ENCODE measurements at regions of chr2 and their contacts with region 1.

Region 1: DNA sequence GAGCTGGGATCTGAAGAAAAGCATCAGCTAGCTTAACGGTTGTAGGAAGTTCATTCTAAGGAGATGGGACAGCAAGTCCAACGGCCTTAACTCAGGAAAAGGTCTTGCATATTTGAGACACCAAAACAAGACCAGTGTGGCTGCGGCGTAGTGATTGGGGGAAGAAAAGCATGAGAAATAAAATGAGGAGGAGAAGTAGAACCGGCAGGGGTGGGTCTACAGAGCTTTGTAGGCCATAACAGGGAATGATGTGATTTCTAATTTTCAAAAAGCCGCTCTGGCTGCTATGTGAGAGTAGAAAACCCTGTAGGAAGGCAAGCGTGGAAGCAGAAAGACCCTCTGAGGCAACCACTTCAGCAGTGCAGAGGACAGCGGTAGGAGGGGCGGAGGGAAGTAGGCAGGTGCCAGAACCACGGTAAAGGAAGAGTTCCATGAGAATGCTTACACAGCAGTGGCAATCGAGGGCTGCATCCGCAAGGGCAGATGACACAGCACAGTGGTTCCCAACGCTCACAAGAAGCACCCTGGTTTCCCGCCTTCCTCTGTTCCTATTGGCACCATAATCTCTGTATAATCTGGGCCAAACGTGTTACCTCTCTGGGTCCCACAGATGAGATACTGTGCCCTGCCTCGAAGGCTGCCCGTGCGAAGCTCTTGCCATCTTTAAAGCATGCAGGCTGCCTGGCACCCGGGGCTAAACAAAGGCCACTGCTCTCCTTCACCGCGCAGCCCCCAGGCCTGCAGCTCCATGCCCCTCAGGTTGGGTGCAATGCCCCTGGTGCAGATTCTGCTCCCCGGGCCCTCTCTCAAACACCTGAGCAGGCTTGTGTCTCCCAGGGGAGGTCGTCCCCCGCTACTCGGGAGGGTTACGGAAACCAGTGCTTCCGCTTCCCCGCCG is 791 bp downstream of the ANKRD39 start:
- DNase-seq: no peak
- ATAC-seq: no peak
- H3K4me3 ChIP-seq: peak overlapping the region; percentile 48 to 87 (median 73)
- H3K4me3 Mint-ChIP-seq: peak overlapping the region; percentile 86
- H3K27ac ChIP-seq: peak overlapping the region; percentile 73 to 88
- H3K27ac Mint-ChIP-seq: peak overlapping the region; percentile 89
- H3K4me1 ChIP-seq: peaks cover 16 to 20% of the 10 kb centered on the region in 2 donors
- H3K4me1 Mint-ChIP-seq: peaks cover 17% of the 10 kb centered on the region
- H3K27me3 ChIP-seq: peaks cover 0 to 10% (median 0%) of the 10 kb centered on the region in 4 experiments
- H3K27me3 Mint-ChIP-seq: no peaks in the 10 kb centered on the region
- CTCF ChIP-seq: no peak

Region 2: GRCh38 chr2:96536445-96537065 is 320.5 kb before region 1 on chr2 and contains the start of gene ARID5A:
- CTCF ChIA-PET with region 1: no interaction called
- POLR2A ChIA-PET with region 1: no interaction called
- intact Hi-C with region 1: loop called (anchors 5 kb)
- DNase-seq: peak; percentile 92
- ATAC-seq: peak; percentile 71
- H3K4me3 ChIP-seq: peak within 1 kb of the TSS; percentile 28 to 85 (median 76)
- H3K4me3 Mint-ChIP-seq: peak within 1 kb of the TSS; percentile 83
- H3K27ac ChIP-seq: peak within 1 kb of the TSS; percentile 81 to 94
- H3K27ac Mint-ChIP-seq: peak within 1 kb of the TSS; percentile 97
- H3K4me1 ChIP-seq: peaks cover 38 to 55% of the 10 kb centered on the region in 2 donors
- H3K4me1 Mint-ChIP-seq: peaks cover 44% of the 10 kb centered on the region
- H3K27me3 ChIP-seq: no peaks in the 10 kb centered on the region
- H3K27me3 Mint-ChIP-seq: no peaks in the 10 kb centered on the region
- CTCF ChIP-seq: peak; percentile 45
- total RNA-seq, gene ARID5A: 93.0 and 100 TPM in 2 replicates

Region 3: GRCh38 chr2:96739633-96740428 is 117.2 kb before region 1 on chr2 and contains the start of gene LMAN2L:
- CTCF ChIA-PET with region 1: interaction called, 5 read pairs
- POLR2A ChIA-PET with region 1: no interaction called
- intact Hi-C with region 1: loop called (anchors 1 kb)
- DNase-seq: peak; percentile 97
- ATAC-seq: peak; percentile 98
- H3K4me3 ChIP-seq: peak within 1 kb of the TSS; percentile 67 to 93 (median 88)
- H3K4me3 Mint-ChIP-seq: peak within 1 kb of the TSS; percentile 97
- H3K27ac ChIP-seq: peak within 1 kb of the TSS; percentile 80 to 85
- H3K27ac Mint-ChIP-seq: peak within 1 kb of the TSS; percentile 97
- H3K4me1 ChIP-seq: peaks cover 14 to 25% of the 10 kb centered on the region in 2 donors
- H3K4me1 Mint-ChIP-seq: peaks cover 29% of the 10 kb centered on the region
- H3K27me3 ChIP-seq: no peaks in the 10 kb centered on the region
- H3K27me3 Mint-ChIP-seq: no peaks in the 10 kb centered on the region
- CTCF ChIP-seq: no peak
- total RNA-seq, gene LMAN2L: 10.7 TPM in 2 replicates

Region 4: GRCh38 chr2:96773922-96774321 is 83.1 kb before region 1 on chr2:
- CTCF ChIA-PET with region 1: interaction called, 10 read pairs
- POLR2A ChIA-PET with region 1: no interaction called
- intact Hi-C with region 1: no loop called
- DNase-seq: peak; percentile 75
- ATAC-seq: peak; percentile 70
- H3K4me3 ChIP-seq: peak overlapping the region; percentile 11 to 67 (median 58)
- H3K4me3 Mint-ChIP-seq: peak overlapping the region; percentile 94
- H3K27ac ChIP-seq: peak overlapping the region; percentile 56 to 78
- H3K27ac Mint-ChIP-seq: peak overlapping the region; percentile 93
- H3K4me1 ChIP-seq: peaks cover 23 to 47% of the 10 kb centered on the region in 2 donors
- H3K4me1 Mint-ChIP-seq: peaks cover 44% of the 10 kb centered on the region
- H3K27me3 ChIP-seq: no peaks in the 10 kb centered on the region
- H3K27me3 Mint-ChIP-seq: no peaks in the 10 kb centered on the region
- CTCF ChIP-seq: no peak

Region 5: DNA sequence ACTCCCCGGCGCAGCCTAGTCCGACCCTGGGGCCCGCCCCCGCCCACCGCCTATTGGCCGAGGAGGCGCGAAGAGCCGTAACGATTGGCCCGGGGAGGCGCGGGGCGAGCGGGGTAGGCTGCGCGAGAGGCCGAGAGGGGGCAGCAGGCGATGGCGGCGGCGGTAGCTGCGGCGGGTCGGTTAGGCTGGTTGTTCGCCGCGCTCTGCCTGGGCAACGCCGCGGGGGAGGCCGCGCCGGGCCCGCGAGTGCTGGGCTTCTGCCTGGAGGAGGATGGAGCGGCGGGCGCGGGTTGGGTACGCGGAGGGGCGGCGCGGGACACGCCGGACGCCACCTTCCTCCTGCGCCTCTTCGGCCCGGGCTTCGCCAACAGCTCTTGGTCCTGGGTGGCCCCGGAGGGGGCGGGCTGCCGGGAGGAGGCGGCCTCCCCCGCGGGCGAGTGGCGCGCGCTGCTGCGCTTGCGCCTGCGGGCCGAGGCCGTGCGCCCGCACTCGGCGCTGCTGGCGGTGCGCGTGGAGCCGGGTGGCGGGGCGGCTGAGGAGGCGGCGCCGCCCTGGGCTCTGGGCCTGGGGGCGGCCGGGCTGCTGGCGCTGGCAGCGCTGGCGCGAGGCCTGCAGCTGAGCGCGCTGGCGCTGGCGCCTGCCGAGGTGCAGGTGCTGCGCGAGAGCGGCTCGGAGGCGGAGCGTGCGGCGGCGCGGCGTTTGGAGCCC is 40.7 kb before region 1 on chr2 and contains the start of gene CNNM3:
- CTCF ChIA-PET with region 1: interaction called, 29 read pairs
- POLR2A ChIA-PET with region 1: interaction called, 14 read pairs
- intact Hi-C with region 1: loop called (anchors 1 kb)
- DNase-seq: peak; percentile 96
- ATAC-seq: peak; percentile 91
- H3K4me3 ChIP-seq: peak within 1 kb of the TSS; percentile 59 to 95 (median 81)
- H3K4me3 Mint-ChIP-seq: peak within 1 kb of the TSS; percentile 93
- H3K27ac ChIP-seq: peak within 1 kb of the TSS; percentile 19 to 76
- H3K27ac Mint-ChIP-seq: peak within 1 kb of the TSS; percentile 93
- H3K4me1 ChIP-seq: peaks cover 34 to 37% of the 10 kb centered on the region in 2 donors
- H3K4me1 Mint-ChIP-seq: peaks cover 57% of the 10 kb centered on the region
- H3K27me3 ChIP-seq: no peaks in the 10 kb centered on the region
- H3K27me3 Mint-ChIP-seq: no peaks in the 10 kb centered on the region
- CTCF ChIP-seq: peak; percentile 73
- total RNA-seq, gene CNNM3: 52.1 and 54.7 TPM in 2 replicates

Region 6: DNA sequence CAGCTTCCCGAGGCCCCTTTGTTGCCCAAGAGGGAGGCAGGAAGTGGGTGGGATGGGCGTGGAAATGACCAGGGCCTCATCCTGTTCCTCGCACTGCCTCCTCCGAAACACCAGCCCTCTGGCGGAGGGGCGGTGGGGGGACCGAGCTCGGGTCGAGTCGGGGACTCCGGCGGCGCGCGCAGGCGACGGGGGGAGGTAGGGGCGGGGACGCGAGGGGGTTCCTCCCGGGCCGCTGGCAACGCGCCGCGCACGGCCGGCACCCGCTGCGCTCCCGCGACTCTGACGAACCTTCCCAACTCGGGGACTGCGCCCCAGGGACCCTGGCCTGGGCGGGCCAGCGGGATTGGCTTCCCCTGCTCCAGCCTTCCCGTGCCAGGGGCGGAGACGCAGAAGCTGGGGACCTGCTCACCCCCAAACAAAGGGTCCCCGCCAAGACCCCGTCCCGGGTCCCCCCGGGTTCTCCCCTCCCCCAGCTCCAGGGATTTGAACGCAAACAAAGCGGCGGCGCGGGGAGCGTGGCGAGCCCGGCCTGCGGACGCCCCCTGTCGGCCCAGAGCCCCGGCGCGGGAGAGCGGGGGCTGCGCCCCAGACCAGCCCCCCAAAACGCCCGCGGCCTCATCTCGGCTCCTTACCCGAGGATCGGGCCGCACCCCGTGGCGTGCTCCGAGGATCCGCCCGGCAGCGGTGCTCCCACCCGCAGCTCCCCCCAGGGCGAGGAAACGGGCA is 11.7 kb after region 1 on chr2:
- CTCF ChIA-PET with region 1: interaction called, 19 read pairs
- POLR2A ChIA-PET with region 1: interaction called, 3 read pairs
- intact Hi-C with region 1: loop called (anchors 1 kb)
- DNase-seq: peak; percentile 62
- ATAC-seq: peak; percentile 22
- H3K4me3 ChIP-seq: peak overlapping the region; percentile 4 to 84 (median 57)
- H3K4me3 Mint-ChIP-seq: peak overlapping the region; percentile 78
- H3K27ac ChIP-seq: no peak overlapping the region
- H3K27ac Mint-ChIP-seq: no peak overlapping the region
- H3K4me1 ChIP-seq: peaks cover 29 to 37% of the 10 kb centered on the region in 2 donors
- H3K4me1 Mint-ChIP-seq: peaks cover 25% of the 10 kb centered on the region
- H3K27me3 ChIP-seq: peaks cover 0 to 41% (median 14%) of the 10 kb centered on the region in 4 experiments
- H3K27me3 Mint-ChIP-seq: peaks cover 30% of the 10 kb centered on the region
- CTCF ChIP-seq: peak; percentile 63

Region 7: GRCh38 chr2:96951093-96951654 is 94.1 kb after region 1 on chr2:
- CTCF ChIA-PET with region 1: interaction called, 45 read pairs
- POLR2A ChIA-PET with region 1: interaction called, 8 read pairs
- intact Hi-C with region 1: no loop called
- DNase-seq: peak; percentile 77
- ATAC-seq: peak; percentile 86
- H3K4me3 ChIP-seq: no peak overlapping the region
- H3K4me3 Mint-ChIP-seq: no peak overlapping the region
- H3K27ac ChIP-seq: no peak overlapping the region
- H3K27ac Mint-ChIP-seq: no peak overlapping the region
- H3K4me1 ChIP-seq: peaks cover 11 to 13% of the 10 kb centered on the region in 2 donors
- H3K4me1 Mint-ChIP-seq: peaks cover 14% of the 10 kb centered on the region
- H3K27me3 ChIP-seq: peaks cover 0 to 22% (median 0%) of the 10 kb centered on the region in 4 experiments
- H3K27me3 Mint-ChIP-seq: peaks cover 16% of the 10 kb centered on the region
- CTCF ChIP-seq: peak; percentile 82

Measured in B cell (primary cell).